T-cell (primary cell): ENCODE measurements at regions of chr5 and their contacts with region 1.

Region 1: GRCh38 chr5:66161356-66161755 is 17.3 kb downstream of the SREK1 start:
- DNase-seq: no peak
- ATAC-seq: no peak
- H3K4me3 ChIP-seq: no peak overlapping the region
- H3K4me3 Mint-ChIP-seq: no peak overlapping the region
- H3K27ac ChIP-seq: no peak overlapping the region
- H3K27ac Mint-ChIP-seq: peak overlapping the region in 1 of 2 donors; percentile 52
- H3K4me1 ChIP-seq: no peaks in the 10 kb centered on the region
- H3K4me1 Mint-ChIP-seq: peaks cover 13 to 21% (median 14%) of the 10 kb centered on the region in 3 donors
- H3K27me3 ChIP-seq: no peaks in the 10 kb centered on the region
- H3K27me3 Mint-ChIP-seq: no peaks in the 10 kb centered on the region

Region 2: DNA sequence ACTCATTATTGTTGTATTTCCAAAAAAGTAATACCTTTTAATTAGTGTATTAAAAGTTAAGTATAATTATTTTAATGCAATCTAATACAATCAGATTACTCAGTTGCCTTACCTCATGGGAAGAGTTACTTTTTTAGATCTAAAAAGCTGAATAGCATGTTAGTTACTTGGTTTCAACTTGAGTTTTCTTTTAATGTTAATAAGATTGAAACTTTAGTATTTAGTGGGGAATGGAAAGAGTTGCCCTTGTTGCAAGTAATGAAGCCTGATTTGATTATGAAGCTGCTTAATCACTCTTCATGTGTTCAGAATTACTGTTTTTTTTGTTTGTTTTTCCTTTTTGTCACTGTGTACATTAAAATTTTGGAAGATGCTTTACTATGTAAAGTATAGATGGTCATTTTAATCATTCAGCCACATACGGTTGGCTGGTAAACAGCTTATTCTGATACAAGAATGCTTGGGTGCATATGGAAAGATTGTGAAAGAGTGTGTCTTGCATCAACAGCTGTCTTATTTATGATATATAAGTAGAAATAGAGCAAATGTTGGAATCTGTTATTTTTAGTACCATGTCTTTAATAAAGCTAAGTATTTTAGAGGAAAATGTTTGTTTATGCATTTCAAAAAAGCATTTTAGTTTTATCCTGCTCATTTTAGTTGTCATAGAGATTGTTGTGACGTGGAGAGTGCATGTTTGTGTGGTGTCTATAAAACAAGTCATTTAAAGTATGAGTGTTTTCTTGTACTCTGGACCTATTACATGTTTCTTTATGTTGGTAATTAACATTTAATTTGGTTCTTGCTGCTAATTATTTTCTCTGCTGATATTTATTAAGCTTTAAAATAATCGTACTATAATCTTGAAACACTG is 19.2 kb after region 1 on chr5:
- CTCF ChIA-PET with region 1: no interaction called
- POLR2A ChIA-PET with region 1: interaction called in 1 of 2 experiments, 12 read pairs
- DNase-seq: no peak
- ATAC-seq: no peak
- H3K4me3 ChIP-seq: no peak overlapping the region
- H3K4me3 Mint-ChIP-seq: no peak overlapping the region
- H3K27ac ChIP-seq: no peak overlapping the region
- H3K27ac Mint-ChIP-seq: peak overlapping the region in 1 of 2 donors; percentile 11
- H3K4me1 ChIP-seq: no peaks in the 10 kb centered on the region
- H3K4me1 Mint-ChIP-seq: peaks cover 0 to 4% (median 0%) of the 10 kb centered on the region in 3 donors
- H3K27me3 ChIP-seq: no peaks in the 10 kb centered on the region
- H3K27me3 Mint-ChIP-seq: no peaks in the 10 kb centered on the region